ENCODE measurements at regions of chr19 and their contacts with region 1.

Region 1: GRCh38 chr19:1905071-1905862 is at the starts of genes ADAT3 and SCAMP4:
- DNase-seq: peak; percentile 99
- H3K4me3 Mint-ChIP-seq: peak within 1 kb of the TSS; percentile 90
- H3K27ac Mint-ChIP-seq: peak within 1 kb of the TSS; percentile 88
- H3K4me1 Mint-ChIP-seq: peaks cover 21% of the 10 kb centered on the region
- H3K27me3 Mint-ChIP-seq: no peaks in the 10 kb centered on the region
- total RNA-seq, gene ADAT3: 9.1 and 9.9 TPM in 2 replicates
- total RNA-seq, gene SCAMP4: 35.9 and 37.9 TPM in 2 replicates

Region 2: DNA sequence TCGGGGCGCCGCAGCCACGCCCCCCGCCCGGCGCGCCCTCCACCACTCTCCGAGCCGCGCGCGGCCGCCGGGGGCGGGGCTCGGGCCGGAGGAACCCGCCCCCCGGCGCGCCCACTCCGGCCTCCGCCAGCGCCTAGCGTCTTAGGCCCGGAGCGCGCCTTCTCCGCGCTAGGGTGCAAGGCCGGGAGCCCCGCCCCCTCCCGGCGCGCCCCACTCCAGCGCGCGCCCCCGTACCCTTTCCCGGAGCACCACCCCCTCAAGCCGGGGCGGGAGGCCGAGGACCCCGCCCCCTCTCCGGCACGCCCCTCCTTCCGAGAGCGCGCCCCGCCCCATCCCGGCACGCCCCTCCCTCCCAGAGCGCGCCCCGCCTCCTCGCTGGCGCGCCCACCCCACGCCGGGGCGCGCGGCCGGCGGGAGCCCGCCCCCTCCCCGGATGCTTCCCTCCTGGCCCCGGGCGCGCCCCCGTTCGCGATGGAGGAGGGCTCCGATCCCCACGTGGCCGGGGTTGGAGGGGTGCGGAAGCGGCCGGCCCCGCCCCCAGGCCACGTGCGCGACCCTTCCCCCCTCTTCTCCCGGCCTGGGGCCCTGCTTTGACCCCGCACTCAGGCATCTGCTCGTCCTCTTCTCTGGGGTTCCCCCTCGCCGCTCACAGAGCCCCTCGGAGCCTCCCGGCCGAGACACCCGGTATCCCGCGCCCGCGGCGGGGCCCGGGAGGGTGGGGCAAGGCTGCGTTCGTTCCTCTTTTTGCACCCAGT is 41.4 kb before region 1 on chr19:
- intact Hi-C with region 1: loop called (anchors 1 kb)
- DNase-seq: peak; percentile 90
- H3K4me3 Mint-ChIP-seq: peak overlapping the region; percentile 75
- H3K27ac Mint-ChIP-seq: peak overlapping the region; percentile 71
- H3K4me1 Mint-ChIP-seq: peaks cover 14% of the 10 kb centered on the region
- H3K27me3 Mint-ChIP-seq: no peaks in the 10 kb centered on the region

Region 3: DNA sequence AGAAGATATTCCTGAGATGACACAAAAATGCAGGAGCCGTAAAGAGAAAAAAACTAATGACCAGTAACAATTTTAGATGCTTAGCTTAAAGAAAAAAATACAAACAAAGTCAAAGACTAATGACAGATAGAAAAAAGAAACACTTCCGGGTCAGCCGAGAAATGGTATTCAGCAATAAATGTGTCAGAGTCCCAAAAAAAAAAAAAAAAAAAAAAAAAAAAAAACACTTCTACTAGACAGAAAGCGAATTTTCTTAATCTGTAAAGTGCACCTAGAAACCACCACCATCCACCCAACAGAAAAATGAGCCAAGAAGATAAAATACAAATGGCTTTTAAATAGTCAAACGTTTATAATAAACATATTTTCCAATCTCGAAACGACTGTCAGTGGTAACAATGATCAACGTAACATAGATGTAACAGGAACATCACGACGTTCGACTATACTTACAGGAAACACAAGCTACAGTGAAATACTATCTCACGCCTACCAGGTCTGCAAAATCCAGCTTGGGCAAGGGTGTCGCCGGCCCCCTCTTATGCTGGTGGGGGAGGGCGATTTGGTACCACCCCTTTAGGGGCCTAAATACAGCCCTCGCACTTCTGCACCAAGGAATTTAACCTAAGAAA is 30.6 kb before region 1 on chr19:
- intact Hi-C with region 1: no loop called
- DNase-seq: no peak
- H3K4me3 Mint-ChIP-seq: peak overlapping the region; percentile 99
- H3K27ac Mint-ChIP-seq: peak overlapping the region; percentile 95
- H3K4me1 Mint-ChIP-seq: peaks cover 12% of the 10 kb centered on the region
- H3K27me3 Mint-ChIP-seq: no peaks in the 10 kb centered on the region

Region 4: DNA sequence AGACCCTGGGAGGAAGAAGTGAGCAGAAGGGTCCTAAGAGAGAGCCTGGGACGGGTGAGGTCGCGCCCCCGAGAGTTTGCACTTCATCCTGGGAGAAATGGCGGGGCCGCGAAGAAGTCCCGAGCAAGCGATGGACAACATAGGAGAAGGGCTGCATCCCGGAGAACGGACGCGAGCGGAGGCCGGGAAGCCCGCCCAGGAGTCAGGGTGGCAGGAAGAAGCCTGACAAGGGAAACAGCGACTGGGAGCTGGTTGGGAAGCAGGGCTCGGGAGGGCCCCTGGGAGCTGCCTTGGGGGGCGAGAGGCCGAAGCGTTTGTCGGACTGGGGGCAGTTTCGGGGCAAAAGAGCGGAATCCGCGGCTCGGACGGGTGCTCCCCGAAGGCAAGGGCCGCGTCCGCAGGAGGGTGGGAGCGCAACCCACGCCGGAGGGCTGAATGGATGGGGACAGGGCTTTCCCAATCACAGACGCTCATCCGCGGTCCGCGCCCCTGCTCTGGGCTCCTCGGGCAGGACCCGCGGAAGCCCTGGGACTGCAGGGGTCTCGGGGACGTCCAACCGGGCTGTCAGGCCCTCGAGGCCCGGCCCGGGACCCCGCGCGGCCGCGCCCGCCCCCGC is 20.4 kb before region 1 on chr19:
- intact Hi-C with region 1: loop called (anchors 1 kb)
- DNase-seq: no peak
- H3K4me3 Mint-ChIP-seq: peak overlapping the region; percentile 99
- H3K27ac Mint-ChIP-seq: peak overlapping the region; percentile 96
- H3K4me1 Mint-ChIP-seq: peaks cover 27% of the 10 kb centered on the region
- H3K27me3 Mint-ChIP-seq: no peaks in the 10 kb centered on the region

Region 5: GRCh38 chr19:1929021-1929742 is 23.9 kb after region 1 on chr19:
- intact Hi-C with region 1: loop called (anchors 1 kb)
- DNase-seq: peak; percentile 71
- H3K4me3 Mint-ChIP-seq: peak overlapping the region; percentile 75
- H3K27ac Mint-ChIP-seq: no peak overlapping the region
- H3K4me1 Mint-ChIP-seq: peaks cover 10% of the 10 kb centered on the region
- H3K27me3 Mint-ChIP-seq: no peaks in the 10 kb centered on the region

Measured in activated T-helper 2 cell treated with anti-CD3 and anti-CD28 coated beads, Interferon-gamma antibody, Interleukin-2, Interleukin-4, amounts not matched to agents 10 μg/mL and 5 μg/mL and 100 μg/mL, durations not matched to agents 14 hours and 24 hours and 36 hours (primary cell).